Heart left ventricle (tissue), 16 donors: ENCODE measurements at regions of chr15 and their contacts with region 1.

Region 1: DNA sequence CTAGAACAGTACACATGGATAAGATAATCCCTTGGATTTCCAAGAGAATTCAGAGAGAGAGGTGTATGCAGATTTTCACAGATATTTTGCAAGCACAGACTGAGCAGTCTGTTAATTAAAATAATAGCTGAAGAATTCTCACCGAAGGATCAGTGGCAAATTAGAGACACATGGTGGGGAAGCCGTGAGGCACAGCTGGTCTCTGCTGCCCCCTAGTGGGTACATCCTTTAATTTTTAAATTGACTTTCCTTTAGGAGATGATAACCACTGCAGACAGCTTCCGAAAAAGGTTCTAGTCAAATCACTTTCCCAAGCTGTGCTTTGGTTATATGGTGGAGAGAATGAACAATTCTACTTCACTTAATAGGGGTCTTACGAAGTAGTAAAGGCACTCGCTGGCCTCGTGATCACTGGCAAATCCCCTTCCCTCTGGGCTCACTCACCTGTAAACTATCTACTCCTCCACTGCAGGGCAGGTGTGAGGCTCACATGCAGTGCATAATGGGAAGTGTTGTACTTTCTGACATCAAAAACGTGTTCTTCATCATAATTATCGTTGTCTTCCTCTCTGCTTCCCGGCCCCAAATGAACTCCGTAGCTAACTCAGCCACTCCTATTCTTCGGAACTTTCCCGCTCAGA is 19.5 kb downstream of the MESD start:
- DNase-seq: peak in 4 of 5 donors; percentile 44 to 57 (median 52)
- ATAC-seq: peak in 3 of 4 donors; percentile 61 to 79 (median 78)
- H3K4me3 ChIP-seq: no peak overlapping the region
- H3K27ac ChIP-seq: no peak overlapping the region
- H3K4me1 ChIP-seq: peaks cover 0 to 8% (median 1%) of the 10 kb centered on the region in 12 donors
- H3K27me3 ChIP-seq: no peaks in the 10 kb centered on the region
- CTCF ChIP-seq: peak; percentile 74 to 97 (median 92)
- POLR2A ChIP-seq: no peak

Region 2: DNA sequence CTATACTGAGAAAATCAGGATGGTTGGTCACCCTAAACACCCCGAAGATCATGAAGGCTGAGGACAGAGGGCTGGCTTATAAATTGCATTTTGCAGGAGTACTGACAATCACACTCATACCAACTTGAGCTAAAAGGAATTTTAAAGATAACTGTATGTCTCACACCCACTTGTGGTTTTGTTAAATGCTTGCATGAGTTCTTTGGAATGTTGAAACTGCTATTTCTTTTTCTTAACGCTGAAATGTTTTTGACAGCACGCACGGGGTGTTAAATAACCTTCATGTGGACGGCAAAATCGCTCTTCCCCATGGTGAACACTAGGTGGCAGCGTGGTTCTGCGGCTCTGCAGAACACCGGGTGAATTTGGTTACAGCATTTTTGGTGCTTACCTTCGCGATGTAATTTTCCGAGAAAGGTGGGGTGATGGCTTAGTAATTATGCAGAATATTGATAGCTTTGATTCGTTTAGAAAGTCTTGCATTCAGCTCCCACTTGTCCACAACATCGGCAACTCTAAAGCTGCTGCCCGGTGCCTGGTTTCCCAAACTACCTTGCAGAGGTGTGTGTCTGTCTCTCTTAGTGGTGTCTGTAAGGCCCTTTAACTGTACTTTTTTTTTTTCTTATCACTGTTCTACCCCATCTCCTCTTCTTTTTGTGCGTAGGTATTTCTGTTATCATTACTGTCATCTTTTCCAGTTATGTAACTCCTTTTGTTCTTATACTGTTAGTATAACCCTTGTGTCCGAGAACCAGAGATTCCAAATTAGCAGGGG is 514.3 kb before region 1 on chr15:
- intact Hi-C with region 1: loop called (anchors 1 to 5 kb)
- DNase-seq: peak in 3 of 5 donors; percentile 49 to 62 (median 49)
- ATAC-seq: peak; percentile 42 to 74 (median 67)
- H3K4me3 ChIP-seq: no peak overlapping the region
- H3K27ac ChIP-seq: no peak overlapping the region
- H3K4me1 ChIP-seq: peaks cover 0 to 7% (median 0%) of the 10 kb centered on the region in 12 donors
- H3K27me3 ChIP-seq: peaks cover 0 to 29% (median 0%) of the 10 kb centered on the region in 9 donors
- CTCF ChIP-seq: peak; percentile 90 to 97 (median 93)
- POLR2A ChIP-seq: no peak

Region 3: GRCh38 chr15:80567721-80568157 is 402.4 kb before region 1 on chr15:
- intact Hi-C with region 1: loop called in 9 of 10 experiments (anchors 2 to 10 kb)
- DNase-seq: peak in 4 of 5 donors; percentile 33 to 50 (median 48)
- ATAC-seq: peak; percentile 56 to 85 (median 81)
- H3K4me3 ChIP-seq: no peak overlapping the region
- H3K27ac ChIP-seq: no peak overlapping the region
- H3K4me1 ChIP-seq: peaks cover 0 to 6% (median 0%) of the 10 kb centered on the region in 12 donors
- H3K27me3 ChIP-seq: peaks cover 0 to 5% (median 0%) of the 10 kb centered on the region in 9 donors
- CTCF ChIP-seq: peak; percentile 46 to 79 (median 64)
- POLR2A ChIP-seq: no peak

Region 4: DNA sequence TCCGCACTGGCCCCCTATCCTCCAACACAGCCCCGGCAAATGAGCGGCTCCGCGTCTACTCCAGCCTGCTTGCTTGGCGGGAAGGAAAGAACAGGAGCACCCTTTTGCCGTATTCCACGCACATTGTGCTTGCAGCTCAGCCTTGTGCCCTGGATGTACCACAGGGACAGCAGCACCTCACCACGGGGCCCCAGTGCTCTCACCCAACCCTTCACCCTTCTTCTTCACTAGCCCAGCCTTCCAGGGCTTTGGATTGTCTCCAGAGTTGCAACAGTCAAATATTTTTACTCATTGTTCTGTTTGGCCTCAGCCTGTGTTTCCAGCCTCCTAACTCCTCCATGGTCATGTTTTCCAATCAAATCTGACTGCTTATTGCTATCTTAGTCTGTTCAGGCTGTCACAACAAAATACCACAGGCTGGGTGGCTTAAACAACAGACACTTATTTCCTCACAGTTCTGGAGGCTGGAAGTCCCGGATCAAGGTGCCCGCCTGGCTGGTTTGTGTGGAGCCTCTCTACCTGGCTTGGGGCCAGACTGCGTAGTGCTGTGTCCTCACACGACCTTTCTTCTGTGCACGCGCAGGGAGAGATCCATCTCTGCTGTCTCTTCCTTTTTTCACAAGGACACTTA is 354.3 kb before region 1 on chr15:
- intact Hi-C with region 1: loop called in 1 of 10 experiments (anchors 5 kb)
- DNase-seq: peak; percentile 41 to 77 (median 67)
- ATAC-seq: peak; percentile 44 to 84 (median 76)
- H3K4me3 ChIP-seq: no peak overlapping the region
- H3K27ac ChIP-seq: peak overlapping the region in 1 of 12 donors; percentile 19
- H3K4me1 ChIP-seq: peaks cover 0 to 11% (median 6%) of the 10 kb centered on the region in 12 donors
- H3K27me3 ChIP-seq: no peaks in the 10 kb centered on the region
- CTCF ChIP-seq: no peak
- POLR2A ChIP-seq: no peak

Region 5: DNA sequence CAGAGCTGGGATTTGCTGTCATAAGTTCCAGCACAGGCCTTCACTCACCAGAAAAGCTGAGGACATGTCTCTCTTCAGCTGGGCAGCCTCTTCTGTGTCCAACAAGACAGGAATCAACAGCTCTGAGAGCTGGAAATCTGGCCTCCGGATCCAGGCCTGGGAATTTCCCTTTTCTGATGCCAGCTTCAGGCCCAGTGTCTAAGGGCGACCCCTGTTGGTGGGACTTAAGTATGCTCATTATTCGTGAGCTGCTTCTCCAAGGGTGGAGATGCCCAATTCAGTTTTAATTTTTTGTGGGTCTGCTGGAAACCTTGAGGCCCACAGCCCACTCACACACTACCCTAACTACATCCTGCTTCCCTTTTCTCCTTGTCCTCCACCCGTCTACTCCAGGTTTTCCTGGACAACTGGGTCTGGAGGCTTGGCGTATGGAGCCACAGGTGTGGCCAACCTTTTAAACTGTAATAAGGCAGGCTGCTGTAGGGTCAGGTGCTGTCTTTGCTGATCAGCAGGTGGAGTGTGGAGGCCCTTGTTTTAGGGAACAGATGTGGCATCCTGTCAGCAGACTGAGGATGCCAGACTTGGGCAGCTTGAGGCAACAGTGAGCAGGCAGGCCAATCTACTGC is 193.6 kb before region 1 on chr15:
- intact Hi-C with region 1: loop called in 9 of 10 experiments (anchors 2 to 5 kb)
- DNase-seq: peak; percentile 64 to 77 (median 72)
- ATAC-seq: peak; percentile 38 to 66 (median 57)
- H3K4me3 ChIP-seq: no peak overlapping the region
- H3K27ac ChIP-seq: peak overlapping the region in 2 of 12 donors; percentile 40 to 58
- H3K4me1 ChIP-seq: peaks cover 2 to 49% (median 31%) of the 10 kb centered on the region in 12 donors
- H3K27me3 ChIP-seq: peaks cover 0 to 43% (median 19%) of the 10 kb centered on the region in 9 donors
- CTCF ChIP-seq: peak; percentile 74 to 89 (median 83)
- POLR2A ChIP-seq: no peak

Region 6: GRCh38 chr15:81011593-81011992 is 41.5 kb after region 1 on chr15:
- intact Hi-C with region 1: no loop called
- DNase-seq: no peak
- ATAC-seq: peak in 2 of 4 donors; percentile 23 to 44
- H3K4me3 ChIP-seq: no peak overlapping the region
- H3K27ac ChIP-seq: no peak overlapping the region
- H3K4me1 ChIP-seq: peaks cover 0 to 66% (median 43%) of the 10 kb centered on the region in 12 donors
- H3K27me3 ChIP-seq: no peaks in the 10 kb centered on the region
- CTCF ChIP-seq: no peak
- POLR2A ChIP-seq: no peak

Region 7: GRCh38 chr15:81256916-81257315 is 286.8 kb after region 1 on chr15:
- intact Hi-C with region 1: loop called in 3 of 10 experiments (anchors 10 kb)
- DNase-seq: no peak
- ATAC-seq: peak in 2 of 4 donors; percentile 48 to 56
- H3K4me3 ChIP-seq: no peak overlapping the region
- H3K27ac ChIP-seq: no peak overlapping the region
- H3K4me1 ChIP-seq: peaks cover 0 to 12% (median 0%) of the 10 kb centered on the region in 12 donors
- H3K27me3 ChIP-seq: no peaks in the 10 kb centered on the region
- CTCF ChIP-seq: peak in 11 of 12 donors; percentile 7 to 66 (median 49)
- POLR2A ChIP-seq: no peak